AG04449 (cell line): ENCODE measurements at regions of chr1 and their contacts with region 1.

Region 1: GRCh38 chr1:67535474-67535873 is 105.3 kb upstream of the SERBP1 start:
- DNase-seq: peak; percentile 49
- H3K4me3 ChIP-seq: no peak overlapping the region
- CTCF ChIP-seq: peak; percentile 95

Region 2: DNA sequence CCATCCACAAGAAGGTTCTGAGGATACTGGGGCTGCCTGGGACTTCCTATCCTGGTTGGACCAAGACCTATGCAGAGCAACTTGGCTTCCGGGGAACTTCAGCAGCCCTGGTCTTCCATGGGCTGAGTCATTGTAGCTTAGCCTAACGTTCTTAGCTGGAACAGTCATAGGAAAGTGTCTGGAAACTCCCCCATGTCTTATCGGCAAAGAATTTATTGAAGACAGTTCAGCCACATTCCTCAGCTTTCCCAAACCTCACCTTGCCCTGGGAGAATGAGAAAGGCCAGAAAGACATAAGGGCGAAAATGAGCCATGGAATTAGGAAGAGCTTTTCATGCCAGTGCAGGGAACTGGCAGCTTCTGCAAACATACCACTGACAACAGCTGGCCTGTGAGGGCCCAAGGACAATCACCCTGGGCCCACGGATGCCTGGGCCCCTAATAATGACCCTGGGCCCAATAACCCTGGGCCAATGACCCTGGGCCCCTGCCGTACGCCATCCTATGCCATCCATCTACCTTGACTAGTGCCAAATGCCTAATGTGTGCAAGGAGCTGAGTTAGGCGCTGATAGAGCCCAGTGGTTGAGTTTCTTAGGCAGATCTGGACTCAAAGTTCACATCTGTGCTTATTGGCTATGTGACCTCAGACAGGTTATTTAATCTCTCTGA is 35.1 kb after region 1 on chr1:
- CTCF ChIA-PET with region 1: interaction called, 14 read pairs
- POLR2A ChIA-PET with region 1: no interaction called
- DNase-seq: peak; percentile 86
- H3K4me3 ChIP-seq: no peak overlapping the region
- CTCF ChIP-seq: no peak

Region 3: DNA sequence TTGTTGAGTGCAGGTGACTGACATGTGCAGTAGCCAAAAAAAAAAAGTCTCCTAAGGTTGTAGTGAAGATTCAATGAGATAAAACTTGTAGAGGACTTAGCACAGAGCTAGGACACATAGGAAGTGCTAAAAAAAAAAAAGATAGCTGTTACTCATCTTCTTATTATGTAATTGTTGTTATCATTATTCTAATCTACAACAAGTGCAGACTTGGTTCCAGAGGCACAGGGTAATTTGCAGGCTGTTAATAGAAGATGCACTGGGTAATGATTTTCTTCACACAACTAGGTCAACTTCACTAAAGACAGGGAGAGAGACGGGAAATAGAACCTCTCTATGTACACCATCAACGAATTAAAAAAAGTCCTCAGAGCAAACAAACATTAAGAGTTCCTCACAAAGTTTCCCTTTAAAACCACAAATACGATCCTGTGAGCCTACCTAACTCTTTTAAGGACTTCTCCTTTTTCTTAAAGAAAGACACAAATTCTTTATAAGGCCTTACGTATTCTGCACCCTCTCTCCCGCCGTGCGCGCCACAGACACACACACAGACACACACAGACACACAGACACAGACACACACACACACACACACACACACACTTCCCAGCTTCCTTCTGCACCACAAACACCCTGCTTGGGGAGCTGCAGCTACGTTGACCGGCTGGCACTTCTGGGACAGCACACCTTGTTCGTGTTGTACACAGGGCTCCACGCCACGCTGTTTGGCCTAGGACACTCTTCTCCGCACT is 99.8 kb after region 1 on chr1:
- CTCF ChIA-PET with region 1: no interaction called
- POLR2A ChIA-PET with region 1: no interaction called
- DNase-seq: no peak
- H3K4me3 ChIP-seq: no peak overlapping the region
- CTCF ChIP-seq: no peak

Region 4: DNA sequence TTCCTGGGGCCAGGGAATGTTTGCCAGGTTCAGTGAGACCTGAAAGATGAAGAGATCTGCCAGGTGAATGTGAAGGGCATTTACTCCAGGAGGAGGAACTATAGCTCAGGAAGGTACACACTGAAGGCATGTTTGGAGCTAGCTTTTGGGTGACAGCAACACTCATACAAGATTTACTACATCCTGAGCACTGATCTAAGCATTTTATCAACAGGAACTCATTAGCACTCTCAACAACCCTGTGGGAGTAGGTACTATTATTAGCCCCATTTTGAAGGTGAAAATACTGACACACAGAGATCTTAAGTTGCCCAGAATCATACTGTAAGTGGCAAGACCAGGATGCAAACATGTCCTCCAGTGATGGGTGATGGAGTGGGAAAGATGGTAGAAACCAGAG is 156.2 kb after region 1 on chr1:
- CTCF ChIA-PET with region 1: interaction called, 23 read pairs
- POLR2A ChIA-PET with region 1: interaction called, 28 read pairs
- DNase-seq: no peak
- H3K4me3 ChIP-seq: no peak overlapping the region
- CTCF ChIP-seq: no peak

Region 5: DNA sequence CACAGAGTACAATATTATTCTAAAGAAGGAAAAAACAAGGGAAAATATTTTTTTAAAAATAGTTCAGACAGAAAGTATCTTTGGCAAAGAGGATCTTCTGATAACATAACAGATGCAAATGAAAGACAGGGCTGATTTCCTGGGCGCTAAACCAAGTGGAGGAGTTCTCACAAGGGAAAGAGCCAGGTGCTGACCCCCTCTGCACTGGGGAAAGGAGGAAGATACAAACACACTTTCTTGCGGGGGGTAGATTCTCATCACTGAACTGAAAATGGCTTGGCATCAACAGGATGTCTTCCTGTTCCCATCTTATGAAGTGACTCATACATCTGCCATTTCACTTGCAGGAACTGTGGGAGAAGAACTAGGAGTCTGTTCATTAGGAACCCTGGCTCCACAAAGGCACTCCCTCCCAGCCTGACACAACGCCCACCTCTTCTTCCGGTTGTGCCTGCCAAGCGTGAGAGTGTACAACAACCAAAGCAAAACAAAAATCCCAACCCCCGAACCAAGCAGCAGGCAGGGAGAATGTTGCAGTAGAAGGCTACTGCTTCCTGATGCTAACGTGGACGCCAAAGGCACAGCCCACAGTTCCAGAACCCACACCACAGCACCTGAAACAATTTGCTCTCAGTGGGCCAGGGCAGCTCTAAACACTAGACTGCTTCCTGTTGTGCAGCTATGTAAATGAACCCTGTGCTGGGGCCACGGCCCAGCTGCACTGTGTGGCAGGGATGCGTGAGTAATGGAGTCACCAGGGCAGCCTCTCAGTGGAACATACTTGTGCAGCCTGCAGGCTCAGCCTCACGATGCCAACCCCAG is 200.5 kb after region 1 on chr1:
- CTCF ChIA-PET with region 1: interaction called, 10 read pairs
- POLR2A ChIA-PET with region 1: no interaction called
- DNase-seq: peak; percentile 82
- H3K4me3 ChIP-seq: no peak overlapping the region; the same call in 1 of the 2 replicates
- CTCF ChIP-seq: no peak

Region 6: GRCh38 chr1:67766141-67766978 is 230.9 kb after region 1 on chr1:
- CTCF ChIA-PET with region 1: interaction called, 653 read pairs
- POLR2A ChIA-PET with region 1: no interaction called
- DNase-seq: peak; percentile 64
- H3K4me3 ChIP-seq: peak overlapping the region; percentile 38
- CTCF ChIP-seq: peak; percentile 42